ENCODE measurements at regions of chr9 and their contacts with region 1.

Region 1: DNA sequence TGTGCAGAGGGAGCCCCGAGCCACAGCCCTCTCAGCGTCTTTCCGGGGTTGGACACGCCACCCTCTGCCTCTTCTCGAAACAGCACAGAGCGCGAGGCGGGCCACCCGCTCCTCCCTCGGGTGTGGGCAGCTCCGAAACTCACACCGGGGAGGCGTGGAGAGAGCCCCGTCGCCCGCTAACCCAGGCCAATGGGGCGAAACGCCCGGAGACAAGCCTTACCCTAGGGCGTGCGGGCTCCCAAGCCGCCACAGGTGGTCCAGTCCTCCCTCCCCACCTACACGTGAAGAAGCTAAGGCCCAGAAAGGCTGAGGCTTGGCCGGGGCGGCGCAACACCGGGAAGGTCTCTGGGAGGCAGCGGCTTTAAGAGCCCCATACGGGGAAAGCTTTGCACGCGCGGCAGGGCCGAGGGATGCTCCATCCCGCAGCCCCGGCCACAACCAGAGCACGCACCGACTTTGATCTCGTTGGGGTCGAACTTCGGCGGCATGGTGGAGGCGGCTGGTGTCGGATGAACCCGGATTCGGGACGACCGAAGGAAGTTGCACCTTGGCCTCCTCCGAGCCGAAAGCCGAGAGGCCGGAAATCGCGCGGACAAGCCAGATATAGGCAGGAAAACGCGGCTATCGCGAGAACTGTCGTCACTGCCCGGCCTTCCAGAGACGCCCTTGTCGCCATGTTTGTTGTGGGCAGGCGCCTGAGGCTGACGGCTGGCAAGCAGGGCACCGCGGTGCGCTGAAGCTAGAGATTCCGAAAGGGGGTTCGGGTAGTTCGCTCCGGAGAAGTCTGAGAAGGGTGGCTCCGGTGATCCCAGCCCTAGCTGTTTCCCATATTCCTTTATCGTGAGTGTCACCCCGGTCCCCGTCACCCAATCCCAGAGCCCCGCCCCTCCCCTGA is at the starts of genes LRSAM1 and RPL12:
- DNase-seq: peak; percentile 99
- ATAC-seq: peak; percentile 81
- total RNA-seq, gene LRSAM1: 52.1 TPM
- total RNA-seq, gene RPL12: 628 TPM

Region 2: GRCh38 chr9:127423934-127424675 is 27.0 kb before region 1 on chr9 and contains the start of gene ZNF79:
- intact Hi-C with region 1: loop called (anchors 2 kb)
- DNase-seq: peak; percentile 97
- ATAC-seq: peak; percentile 99
- total RNA-seq, gene ZNF79: 5.8 TPM

Region 3: DNA sequence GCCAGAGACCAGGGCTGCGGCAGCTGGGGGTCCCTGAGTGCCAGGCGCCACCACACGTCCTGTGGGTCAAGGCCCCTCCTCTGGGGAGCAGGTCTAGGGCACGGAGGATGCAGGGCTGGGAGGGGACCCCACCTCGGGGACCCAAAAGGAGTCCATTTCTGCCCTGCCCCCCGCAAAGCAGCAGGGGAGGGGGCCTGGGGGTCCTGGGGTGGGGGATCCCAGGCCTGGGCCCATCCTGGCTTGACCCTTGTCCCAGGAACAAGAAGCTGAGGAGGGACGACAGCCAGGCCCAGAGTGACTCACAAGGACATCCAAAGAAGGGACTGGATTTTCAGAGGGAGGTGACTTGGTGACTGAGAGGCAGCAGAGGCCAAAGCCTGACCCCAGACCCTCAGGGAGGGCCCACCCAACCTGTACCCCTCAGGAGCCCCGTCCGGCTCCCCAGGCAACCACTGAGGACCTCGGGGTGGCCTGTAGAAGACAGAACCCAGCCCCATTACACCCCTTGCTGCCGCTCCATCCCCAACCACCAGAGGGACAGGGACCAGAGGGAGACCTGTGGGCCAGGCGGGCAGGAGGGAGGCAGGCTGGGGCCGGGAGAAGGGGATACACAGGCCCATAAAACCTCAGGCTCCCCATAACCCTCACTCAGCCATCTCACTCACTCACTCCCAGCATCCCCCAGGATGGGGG is 54.5 kb after region 1 on chr9:
- intact Hi-C with region 1: no loop called
- DNase-seq: no peak
- ATAC-seq: peak; percentile 30

Region 4: GRCh38 chr9:128470560-128470959 is 1019.5 kb after region 1 on chr9:
- intact Hi-C with region 1: no loop called
- DNase-seq: peak; percentile 52
- ATAC-seq: no peak